AG04450 (cell line): ENCODE measurements at regions of chr1 and their contacts with region 1.

Region 1: DNA sequence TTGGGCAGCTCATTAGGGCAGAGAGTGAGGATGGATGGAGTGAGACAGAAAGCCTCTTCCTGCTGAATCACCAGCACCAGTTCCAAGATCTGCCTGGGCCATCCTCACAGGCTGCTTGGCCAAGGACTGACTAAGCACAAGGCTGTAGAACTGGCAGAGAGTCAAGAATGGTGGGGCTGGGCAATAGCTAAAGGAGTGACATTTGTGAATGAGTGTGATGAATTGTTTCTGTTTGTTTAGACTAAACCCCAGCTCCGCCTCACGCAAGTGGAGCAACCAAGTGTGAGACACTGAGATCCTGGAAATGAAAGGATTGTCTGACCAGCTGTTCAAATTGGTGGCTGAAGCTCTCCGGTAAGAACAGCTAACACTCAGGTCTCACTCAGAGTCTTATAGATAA is 38.6 kb downstream of the BRINP2 start:
- DNase-seq: peak; percentile 99
- H3K4me3 ChIP-seq: no peak overlapping the region
- H3K27ac ChIP-seq: peak overlapping the region; percentile 55
- H3K27me3 ChIP-seq: no peaks in the 10 kb centered on the region
- CTCF ChIP-seq: no peak

Region 2: GRCh38 chr1:177219554-177220513 is 10.5 kb after region 1 on chr1:
- CTCF ChIA-PET with region 1: no interaction called
- POLR2A ChIA-PET with region 1: interaction called, 11 read pairs
- DNase-seq: no peak
- H3K4me3 ChIP-seq: no peak overlapping the region
- H3K27ac ChIP-seq: no peak overlapping the region
- H3K27me3 ChIP-seq: no peaks in the 10 kb centered on the region
- CTCF ChIP-seq: no peak